B cell (primary cell): ENCODE measurements at regions of chr1 and their contacts with region 1.

Region 1: GRCh38 chr1:167752219-167752985 is 30.6 kb downstream of the MPZL1 start:
- DNase-seq: no peak
- ATAC-seq: no peak
- H3K4me3 ChIP-seq: peak overlapping the region in 1 of 5 experiments; percentile 41
- H3K4me3 Mint-ChIP-seq: peak overlapping the region; percentile 82
- H3K27ac ChIP-seq: peak overlapping the region; percentile 72 to 87
- H3K27ac Mint-ChIP-seq: peak overlapping the region; percentile 85
- H3K4me1 ChIP-seq: peaks cover 34 to 38% of the 10 kb centered on the region in 2 donors
- H3K4me1 Mint-ChIP-seq: peaks cover 64% of the 10 kb centered on the region
- H3K27me3 ChIP-seq: no peaks in the 10 kb centered on the region
- H3K27me3 Mint-ChIP-seq: no peaks in the 10 kb centered on the region
- CTCF ChIP-seq: no peak

Region 2: DNA sequence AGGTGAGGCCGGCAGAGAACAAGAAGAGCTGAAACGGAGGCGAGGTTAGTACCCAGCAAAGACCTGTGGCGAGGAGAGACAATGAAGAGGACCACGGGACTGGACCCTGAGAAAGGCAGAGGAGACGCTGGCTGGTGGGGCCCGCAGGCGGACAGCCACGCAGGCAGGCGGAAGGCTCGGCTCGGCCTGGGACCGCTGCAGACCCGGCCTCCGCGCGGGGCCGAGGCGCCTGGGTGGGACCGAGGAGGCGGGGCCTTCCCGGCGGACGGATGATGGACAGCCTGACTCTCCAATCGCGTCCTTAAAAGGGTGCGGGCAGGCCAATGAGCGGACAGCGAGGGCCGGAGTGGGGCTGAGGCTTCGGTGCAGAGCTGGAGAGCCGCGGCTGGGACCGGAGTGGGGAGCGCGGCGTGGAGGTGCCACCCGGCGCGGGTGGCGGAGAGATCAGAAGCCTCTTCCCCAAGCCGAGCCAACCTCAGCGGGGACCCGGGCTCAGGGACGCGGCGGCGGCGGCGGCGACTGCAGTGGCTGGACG is 30.7 kb before region 1 on chr1 and contains the start of gene MPZL1:
- CTCF ChIA-PET with region 1: interaction called, 14 read pairs
- POLR2A ChIA-PET with region 1: interaction called, 5 read pairs
- intact Hi-C with region 1: loop called (anchors 1 kb)
- DNase-seq: peak; percentile 96
- ATAC-seq: peak; percentile 97
- H3K4me3 ChIP-seq: peak within 1 kb of the TSS; percentile 64 to 93 (median 76)
- H3K4me3 Mint-ChIP-seq: peak within 1 kb of the TSS; percentile 87
- H3K27ac ChIP-seq: peak within 1 kb of the TSS; percentile 49 to 66
- H3K27ac Mint-ChIP-seq: peak within 1 kb of the TSS; percentile 86
- H3K4me1 ChIP-seq: peaks cover 46 to 59% of the 10 kb centered on the region in 2 donors
- H3K4me1 Mint-ChIP-seq: peaks cover 70% of the 10 kb centered on the region
- H3K27me3 ChIP-seq: no peaks in the 10 kb centered on the region
- H3K27me3 Mint-ChIP-seq: no peaks in the 10 kb centered on the region
- CTCF ChIP-seq: no peak
- total RNA-seq, gene MPZL1: 27.7 and 27.9 TPM in 2 replicates

Region 3: DNA sequence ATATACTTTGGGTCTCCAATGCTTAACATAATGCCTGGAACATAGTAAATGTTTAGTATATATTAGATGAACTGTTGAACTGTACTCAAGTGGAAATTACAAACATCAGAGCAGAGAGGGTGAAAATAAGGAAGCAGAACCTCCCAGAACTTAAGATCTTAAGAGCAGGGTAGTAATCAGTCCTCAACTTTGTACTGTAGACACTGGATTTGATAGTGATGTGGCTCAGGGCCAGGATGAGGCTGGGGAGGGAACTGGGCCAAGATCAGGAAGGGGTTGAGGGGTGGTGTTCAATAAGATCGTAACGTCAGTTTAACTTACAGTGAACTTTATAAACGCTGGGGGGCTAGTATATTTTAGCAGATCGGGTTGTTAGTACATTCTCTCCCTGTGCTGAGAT is 15.2 kb before region 1 on chr1:
- CTCF ChIA-PET with region 1: interaction called, 6 read pairs
- POLR2A ChIA-PET with region 1: no interaction called
- intact Hi-C with region 1: loop called (anchors 2 kb)
- DNase-seq: no peak
- ATAC-seq: no peak
- H3K4me3 ChIP-seq: no peak overlapping the region
- H3K4me3 Mint-ChIP-seq: no peak overlapping the region
- H3K27ac ChIP-seq: no peak overlapping the region
- H3K27ac Mint-ChIP-seq: no peak overlapping the region
- H3K4me1 ChIP-seq: no peaks in the 10 kb centered on the region
- H3K4me1 Mint-ChIP-seq: peaks cover 10% of the 10 kb centered on the region
- H3K27me3 ChIP-seq: no peaks in the 10 kb centered on the region
- H3K27me3 Mint-ChIP-seq: no peaks in the 10 kb centered on the region
- CTCF ChIP-seq: no peak

Region 4: GRCh38 chr1:167803358-167804207 is 51.2 kb after region 1 on chr1:
- CTCF ChIA-PET with region 1: interaction called, 3 read pairs
- POLR2A ChIA-PET with region 1: no interaction called
- intact Hi-C with region 1: loop called (anchors 1 kb)
- DNase-seq: peak; percentile 92
- ATAC-seq: peak; percentile 98
- H3K4me3 ChIP-seq: no peak overlapping the region
- H3K4me3 Mint-ChIP-seq: peak overlapping the region; percentile 18
- H3K27ac ChIP-seq: no peak overlapping the region
- H3K27ac Mint-ChIP-seq: peak overlapping the region; percentile 6
- H3K4me1 ChIP-seq: peaks cover 13 to 16% of the 10 kb centered on the region in 2 donors
- H3K4me1 Mint-ChIP-seq: peaks cover 23% of the 10 kb centered on the region
- H3K27me3 ChIP-seq: no peaks in the 10 kb centered on the region
- H3K27me3 Mint-ChIP-seq: no peaks in the 10 kb centered on the region
- CTCF ChIP-seq: peak; percentile 93